ENCODE measurements at regions of chr12 and their contacts with region 1.

Region 1: GRCh38 chr12:69585189-69586062 is at the start of gene CCT2:
- DNase-seq: peak; percentile 96 to 98
- H3K4me3 ChIP-seq: peak within 1 kb of the TSS; percentile 97
- H3K4me3 Mint-ChIP-seq: peak within 1 kb of the TSS; percentile 97
- H3K27ac Mint-ChIP-seq: peak within 1 kb of the TSS; percentile 96
- H3K4me1 ChIP-seq: no peaks in the 10 kb centered on the region
- H3K4me1 Mint-ChIP-seq: peaks cover 5% of the 10 kb centered on the region
- H3K27me3 ChIP-seq: no peaks in the 10 kb centered on the region
- H3K27me3 Mint-ChIP-seq: no peaks in the 10 kb centered on the region
- CTCF ChIP-seq: peak; percentile 31 to 48
- total RNA-seq, gene CCT2: 321 and 341 TPM in 2 replicates

Region 2: GRCh38 chr12:69639400-69640016 is 54.1 kb after region 1 on chr12:
- CTCF ChIA-PET with region 1: interaction called, 5 read pairs
- POLR2A ChIA-PET with region 1: no interaction called
- intact Hi-C with region 1: loop called (anchors 2 kb)
- DNase-seq: peak; percentile 70 to 75
- H3K4me3 ChIP-seq: no peak overlapping the region
- H3K4me3 Mint-ChIP-seq: no peak overlapping the region
- H3K27ac Mint-ChIP-seq: no peak overlapping the region
- H3K4me1 ChIP-seq: no peaks in the 10 kb centered on the region
- H3K4me1 Mint-ChIP-seq: no peaks in the 10 kb centered on the region
- H3K27me3 ChIP-seq: no peaks in the 10 kb centered on the region
- H3K27me3 Mint-ChIP-seq: no peaks in the 10 kb centered on the region
- CTCF ChIP-seq: peak; percentile 81 to 89

Region 3: DNA sequence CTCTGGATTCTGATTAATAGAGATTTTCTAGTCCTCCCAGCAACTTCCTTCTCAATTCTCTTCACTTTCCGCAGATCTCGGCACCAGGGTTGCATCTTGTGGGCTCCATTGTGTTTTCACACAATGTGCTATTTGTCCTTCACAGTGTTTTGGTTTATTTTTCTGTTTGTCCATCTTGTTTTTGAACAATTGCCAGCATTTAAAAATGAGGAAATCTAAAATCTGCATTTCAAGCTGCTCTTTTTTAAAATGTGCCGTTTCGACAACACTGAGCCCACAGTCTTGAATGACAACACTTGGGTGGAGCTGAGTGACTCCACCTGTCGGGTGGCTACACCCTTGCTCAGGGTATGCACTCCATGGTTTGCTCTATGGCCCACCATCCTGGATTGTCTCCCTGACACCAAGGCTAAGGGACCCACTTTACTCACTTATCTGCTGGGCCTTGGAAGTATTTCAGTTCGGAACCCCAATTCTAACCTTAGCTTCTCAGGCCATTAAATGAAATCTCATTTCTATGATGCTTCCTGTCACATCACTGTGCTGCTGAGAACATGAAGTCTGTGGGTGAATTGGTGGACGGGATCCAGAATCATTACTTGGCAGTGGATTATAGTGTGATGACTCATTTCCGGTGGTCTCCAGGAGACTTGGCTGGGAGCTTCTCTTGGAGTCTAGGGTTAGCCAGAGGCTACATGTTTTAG is 236.2 kb after region 1 on chr12:
- CTCF ChIA-PET with region 1: no interaction called
- POLR2A ChIA-PET with region 1: no interaction called
- intact Hi-C with region 1: no loop called
- DNase-seq: no peak
- H3K4me3 ChIP-seq: no peak overlapping the region
- H3K4me3 Mint-ChIP-seq: no peak overlapping the region
- H3K27ac Mint-ChIP-seq: no peak overlapping the region
- H3K4me1 ChIP-seq: no peaks in the 10 kb centered on the region
- H3K4me1 Mint-ChIP-seq: no peaks in the 10 kb centered on the region
- H3K27me3 ChIP-seq: no peaks in the 10 kb centered on the region
- H3K27me3 Mint-ChIP-seq: no peaks in the 10 kb centered on the region
- CTCF ChIP-seq: no peak